ENCODE measurements at regions of chr1 and their contacts with region 1.

Region 1: DNA sequence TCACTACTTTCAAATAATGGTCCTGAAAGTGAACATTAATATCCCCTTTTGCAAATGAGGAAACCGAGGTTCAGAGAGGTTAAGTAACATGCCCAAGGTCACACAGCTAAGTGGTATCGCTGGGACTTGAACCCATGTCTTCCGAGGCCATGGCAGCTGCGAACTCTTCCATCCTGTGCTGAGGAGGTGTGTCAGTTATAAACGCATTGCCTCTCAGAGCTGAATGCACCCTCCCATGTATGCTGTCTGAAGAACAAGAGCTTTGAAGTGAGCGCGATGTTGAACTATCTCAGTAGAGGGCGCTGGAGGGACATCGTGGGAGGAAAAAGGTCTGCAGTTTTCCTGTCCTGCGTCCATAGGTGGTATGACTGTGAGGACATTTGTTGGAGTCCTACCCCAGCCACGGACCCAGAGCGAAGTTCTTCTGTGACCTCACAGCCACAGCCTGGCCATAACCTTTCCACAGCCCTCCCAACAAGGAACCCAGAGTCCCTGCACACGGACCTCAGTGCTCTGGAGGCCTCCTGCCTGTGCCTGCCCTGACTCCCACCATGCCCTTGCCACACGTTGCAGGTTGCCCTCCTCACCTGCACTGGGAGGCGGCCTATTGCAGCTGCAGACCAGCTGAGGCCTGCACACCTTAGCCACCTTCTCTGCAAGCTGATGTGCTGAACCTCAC is 7.5 kb downstream of the MYOC start:
- DNase-seq: peak; percentile 49
- ATAC-seq: peak; percentile 91
- H3K4me3 ChIP-seq: no peak overlapping the region
- H3K27ac ChIP-seq: no peak overlapping the region
- H3K4me1 ChIP-seq: no peaks in the 10 kb centered on the region
- H3K27me3 ChIP-seq: no peaks in the 10 kb centered on the region
- CTCF ChIP-seq: peak; percentile 66 to 82 (median 82)
- EP300 ChIP-seq: no peak
- POLR2A ChIP-seq: no peak
- RAD21 ChIP-seq: peak; percentile 70

Region 2: DNA sequence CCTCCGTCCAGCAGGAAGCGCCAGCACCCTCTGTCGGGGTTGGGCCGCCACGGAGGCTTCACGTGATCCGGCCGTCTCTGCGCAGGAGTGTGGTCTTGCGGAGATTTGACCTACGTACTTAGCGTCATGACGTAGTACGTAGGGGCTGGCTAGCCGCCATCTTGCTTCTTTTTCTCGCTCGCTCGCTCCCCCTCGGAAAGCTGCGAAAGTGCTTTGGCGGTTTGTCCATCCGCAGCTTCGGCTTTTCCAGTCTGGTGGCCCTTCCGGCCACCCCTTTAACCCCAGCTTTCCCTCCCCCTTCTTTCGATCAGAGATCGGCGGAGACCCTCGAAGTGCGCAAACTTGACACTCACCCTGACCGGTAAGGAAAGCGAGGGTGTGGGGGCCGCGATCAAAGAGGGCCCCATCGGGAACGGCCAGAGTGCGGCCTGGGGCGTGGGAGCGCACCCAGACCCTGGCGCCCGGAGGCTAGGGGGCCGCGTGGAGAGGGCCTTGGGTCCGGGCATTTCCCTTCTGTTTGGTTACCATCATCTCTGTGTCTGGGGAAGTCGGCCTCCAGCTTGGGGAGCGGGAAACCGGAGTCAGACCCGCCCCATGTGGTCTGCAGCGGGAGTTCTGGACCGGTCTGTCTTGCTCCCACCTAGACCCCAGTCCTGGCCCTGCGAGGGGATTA is 159.4 kb before region 1 on chr1 and contains the start of gene PRRC2C:
- CTCF ChIA-PET with region 1: interaction called, 27 read pairs
- POLR2A ChIA-PET with region 1: interaction called, 8 read pairs
- RAD21 ChIA-PET with region 1: interaction called, 15 read pairs
- SMC1A ChIA-PET with region 1: interaction called, 22 read pairs
- in situ Hi-C with region 1: no loop called
- intact Hi-C with region 1: no loop called
- DNase-seq: peak; percentile 90
- ATAC-seq: peak; percentile 93
- H3K4me3 ChIP-seq: peak within 1 kb of the TSS; percentile 92
- H3K27ac ChIP-seq: peak within 1 kb of the TSS; percentile 98
- H3K4me1 ChIP-seq: no peaks in the 10 kb centered on the region; the same call in 1 of the 2 replicates
- H3K27me3 ChIP-seq: no peaks in the 10 kb centered on the region
- CTCF ChIP-seq: peak; percentile 73 to 98 (median 88)
- EP300 ChIP-seq: peak; percentile 22 to 26; a peak in 1 of 4 replicates
- POLR2A ChIP-seq: peak; percentile 82
- RAD21 ChIP-seq: peak; percentile 82
- polyA plus RNA-seq, gene PRRC2C: 53.4 to 74.2 TPM

Region 3: DNA sequence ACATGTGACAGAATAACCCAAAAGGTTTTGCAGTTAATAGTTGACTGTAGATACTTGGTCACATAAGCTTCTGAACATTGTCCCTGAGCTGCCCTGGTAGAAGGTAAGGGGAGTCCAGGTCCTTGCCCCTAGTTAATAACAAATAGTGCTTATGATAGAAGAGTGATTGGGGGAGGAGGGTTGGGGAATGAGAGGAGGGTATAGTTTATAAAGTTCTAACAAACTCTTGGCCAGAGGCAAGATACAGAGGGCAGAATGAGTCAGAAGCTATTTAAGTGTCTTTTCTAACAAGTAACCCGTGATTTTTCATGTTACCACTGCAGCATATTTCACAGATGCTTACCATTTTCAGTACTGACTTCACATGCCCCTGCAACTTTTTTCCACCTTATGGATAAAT is 49.6 kb before region 1 on chr1:
- CTCF ChIA-PET with region 1: interaction called, 60 read pairs
- POLR2A ChIA-PET with region 1: interaction called, 5 read pairs
- RAD21 ChIA-PET with region 1: interaction called, 8 read pairs
- SMC1A ChIA-PET with region 1: interaction called, 38 read pairs
- in situ Hi-C with region 1: no loop called
- intact Hi-C with region 1: no loop called
- DNase-seq: no peak
- ATAC-seq: peak; percentile 70
- H3K4me3 ChIP-seq: no peak overlapping the region
- H3K27ac ChIP-seq: no peak overlapping the region
- H3K4me1 ChIP-seq: no peaks in the 10 kb centered on the region
- H3K27me3 ChIP-seq: no peaks in the 10 kb centered on the region
- CTCF ChIP-seq: no peak
- EP300 ChIP-seq: 0 out of 4 replicates have a peak, but pooled peaks have one; percentile 27 to 54
- POLR2A ChIP-seq: no peak
- RAD21 ChIP-seq: no peak

Region 4: DNA sequence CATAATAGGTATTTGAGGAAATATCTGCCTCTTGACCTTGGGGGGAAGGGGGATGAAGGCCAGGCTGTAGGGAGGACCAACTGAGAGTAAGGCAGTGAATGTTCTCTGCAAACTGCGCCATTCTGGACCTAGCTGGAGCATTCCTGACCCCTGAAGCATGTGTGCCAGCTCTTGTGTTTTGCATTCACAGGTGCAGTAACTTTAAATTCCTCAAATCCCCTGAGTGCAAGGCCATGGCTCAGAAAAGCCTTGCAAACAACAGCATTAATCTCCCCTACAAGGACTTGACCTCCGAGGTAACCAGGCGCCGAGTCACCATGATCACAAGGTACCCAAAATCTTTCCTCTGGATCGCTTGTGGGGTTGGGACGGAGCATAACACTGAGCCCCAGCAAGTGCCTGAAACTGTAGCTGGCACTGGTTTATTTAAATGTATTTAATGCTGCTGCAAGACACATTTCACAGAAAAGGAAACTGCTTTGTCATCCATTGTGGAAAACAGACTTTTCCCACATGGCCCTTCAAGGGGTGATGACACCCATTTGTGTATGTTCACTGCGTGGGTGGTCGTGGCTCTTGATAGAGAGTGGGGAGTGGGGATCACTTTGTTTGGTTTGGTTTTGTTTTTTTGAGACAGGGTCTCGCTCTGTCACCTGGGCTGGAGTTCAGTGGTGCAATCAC is 21.2 kb before region 1 on chr1:
- CTCF ChIA-PET with region 1: interaction called, 38 read pairs
- POLR2A ChIA-PET with region 1: interaction called, 5 read pairs
- RAD21 ChIA-PET with region 1: interaction called, 22 read pairs
- SMC1A ChIA-PET with region 1: interaction called, 20 read pairs
- in situ Hi-C with region 1: no loop called
- intact Hi-C with region 1: no loop called
- DNase-seq: no peak
- ATAC-seq: no peak
- H3K4me3 ChIP-seq: no peak overlapping the region
- H3K27ac ChIP-seq: no peak overlapping the region
- H3K4me1 ChIP-seq: peaks cover 6% of the 10 kb centered on the region; the same call in 1 of the 2 replicates
- H3K27me3 ChIP-seq: no peaks in the 10 kb centered on the region
- CTCF ChIP-seq: no peak
- EP300 ChIP-seq: no peak
- POLR2A ChIP-seq: no peak
- RAD21 ChIP-seq: no peak

Region 5: GRCh38 chr1:171715813-171716251 is 70.9 kb after region 1 on chr1:
- CTCF ChIA-PET with region 1: interaction called, 61 read pairs
- POLR2A ChIA-PET with region 1: interaction called, 4 read pairs
- RAD21 ChIA-PET with region 1: interaction called, 9 read pairs
- SMC1A ChIA-PET with region 1: interaction called, 49 read pairs
- in situ Hi-C with region 1: no loop called
- intact Hi-C with region 1: loop called (anchors 2 kb)
- DNase-seq: no peak
- ATAC-seq: peak; percentile 63
- H3K4me3 ChIP-seq: no peak overlapping the region
- H3K27ac ChIP-seq: no peak overlapping the region
- H3K4me1 ChIP-seq: no peaks in the 10 kb centered on the region
- H3K27me3 ChIP-seq: no peaks in the 10 kb centered on the region
- CTCF ChIP-seq: peak; percentile 21 to 43 (median 27); a peak in 2 of 6 replicates
- EP300 ChIP-seq: no peak
- POLR2A ChIP-seq: no peak
- RAD21 ChIP-seq: no peak

Region 6: DNA sequence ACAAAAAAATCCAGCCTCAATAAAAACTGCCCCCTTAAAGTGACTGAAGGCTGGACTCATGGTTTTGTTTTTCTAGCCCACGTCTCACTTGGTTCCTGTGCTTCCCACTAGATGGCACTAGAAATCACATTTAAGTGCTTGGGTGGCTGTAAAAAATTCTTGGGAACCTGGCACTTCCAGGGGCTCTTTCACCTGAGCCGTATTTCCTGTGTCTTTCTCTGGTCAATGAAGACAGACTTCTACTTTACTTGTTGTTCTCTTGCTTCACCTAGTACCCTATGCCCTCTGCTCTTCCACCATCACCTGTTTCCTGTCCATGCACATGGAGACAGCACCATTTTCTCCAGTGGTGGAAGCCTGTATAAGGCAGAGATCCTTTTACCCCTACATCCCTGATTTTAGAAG is 156.5 kb after region 1 on chr1:
- CTCF ChIA-PET with region 1: interaction called, 33 read pairs
- POLR2A ChIA-PET with region 1: interaction called, 4 read pairs
- RAD21 ChIA-PET with region 1: interaction called, 11 read pairs
- SMC1A ChIA-PET with region 1: interaction called, 13 read pairs
- in situ Hi-C with region 1: no loop called
- intact Hi-C with region 1: no loop called
- DNase-seq: no peak
- ATAC-seq: peak; percentile 58
- H3K4me3 ChIP-seq: no peak overlapping the region
- H3K27ac ChIP-seq: no peak overlapping the region
- H3K4me1 ChIP-seq: peaks cover 7% of the 10 kb centered on the region
- H3K27me3 ChIP-seq: no peaks in the 10 kb centered on the region
- CTCF ChIP-seq: peak; percentile 71 to 72 (median 72)
- EP300 ChIP-seq: no peak
- POLR2A ChIP-seq: no peak
- RAD21 ChIP-seq: peak; percentile 80